Calu3 (cell line): ENCODE measurements at regions of chr2 and their contacts with region 1.

Region 1: DNA sequence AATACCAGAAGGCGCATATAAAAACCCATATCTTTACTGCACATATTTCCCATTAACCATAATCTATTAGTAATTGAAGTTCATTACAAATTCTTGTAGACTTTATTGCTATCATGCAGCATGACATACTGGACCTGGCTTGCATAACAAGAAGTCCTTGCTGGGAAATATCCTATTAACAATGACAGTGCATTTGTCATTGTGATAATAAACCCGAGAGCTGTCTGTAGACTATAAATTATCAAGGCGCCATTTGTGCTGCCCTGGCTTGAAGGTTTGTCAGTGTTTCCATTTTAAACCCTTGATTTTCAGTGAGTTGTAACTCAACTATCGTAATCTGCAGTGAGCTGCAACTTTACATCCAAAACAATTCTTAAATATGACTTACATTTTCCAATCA is 59.0 kb downstream of the HNMT start:
- DNase-seq: no peak
- H3K4me3 Mint-ChIP-seq: no peak overlapping the region
- H3K27ac Mint-ChIP-seq: no peak overlapping the region
- H3K4me1 Mint-ChIP-seq: peaks cover 7% of the 10 kb centered on the region
- H3K27me3 Mint-ChIP-seq: no peaks in the 10 kb centered on the region
- CTCF ChIP-seq: no peak

Region 2: GRCh38 chr2:137947728-137948336 is 75.5 kb before region 1 on chr2:
- CTCF ChIA-PET with region 1: no interaction called
- intact Hi-C with region 1: loop called (anchors 5 kb)
- DNase-seq: peak; percentile 77
- H3K4me3 Mint-ChIP-seq: no peak overlapping the region
- H3K27ac Mint-ChIP-seq: peak overlapping the region; percentile 44
- H3K4me1 Mint-ChIP-seq: peaks cover 77% of the 10 kb centered on the region
- H3K27me3 Mint-ChIP-seq: no peaks in the 10 kb centered on the region
- CTCF ChIP-seq: peak; percentile 37